ENCODE measurements at regions of chr5 and their contacts with region 1.

Region 1: DNA sequence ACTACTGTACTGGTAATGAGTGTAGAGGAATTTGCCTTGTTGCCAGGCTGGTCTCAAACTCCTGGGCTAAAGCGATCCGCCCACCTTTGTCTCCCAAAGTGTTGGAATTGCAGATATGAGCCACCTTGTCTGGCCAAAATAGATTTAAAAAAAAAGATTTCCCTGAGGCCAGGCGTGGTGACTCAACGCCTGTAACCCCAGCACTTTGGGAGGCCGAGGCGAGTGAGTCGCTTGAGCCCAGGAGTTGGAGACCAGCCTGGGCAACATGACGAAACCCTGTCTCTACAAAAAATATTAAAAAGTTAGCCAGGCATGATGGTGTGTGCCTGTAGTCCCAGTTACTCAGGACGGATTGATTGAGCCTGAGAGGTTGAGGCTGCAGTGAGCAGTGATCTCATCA is 62.5 kb downstream of the IPO11 start:
- DNase-seq: peak; percentile 79
- ATAC-seq: peak; percentile 91
- H3K4me3 ChIP-seq: no peak overlapping the region
- H3K27ac ChIP-seq: no peak overlapping the region
- H3K4me1 ChIP-seq: peaks cover 6% of the 10 kb centered on the region
- H3K27me3 ChIP-seq: no peaks in the 10 kb centered on the region
- CTCF ChIP-seq: no peak
- POLR2A ChIP-seq: no peak
- RAD21 ChIP-seq: no peak

Region 2: GRCh38 chr5:61551637-61552313 is 923.3 kb before region 1 on chr5:
- CTCF ChIA-PET with region 1: no interaction called
- POLR2A ChIA-PET with region 1: no interaction called
- dilution Hi-C with region 1: no loop called
- in situ Hi-C with region 1: no loop called
- intact Hi-C with region 1: no loop called
- DNase-seq: no peak
- ATAC-seq: no peak
- H3K4me3 ChIP-seq: no peak overlapping the region
- H3K27ac ChIP-seq: no peak overlapping the region
- H3K4me1 ChIP-seq: no peaks in the 10 kb centered on the region
- H3K27me3 ChIP-seq: peaks cover 2% of the 10 kb centered on the region; the same call in 1 of the 2 replicates
- CTCF ChIP-seq: no peak
- POLR2A ChIP-seq: no peak
- RAD21 ChIP-seq: no peak

Region 3: GRCh38 chr5:62431735-62432620 is 43.1 kb before region 1 on chr5:
- CTCF ChIA-PET with region 1: no interaction called
- POLR2A ChIA-PET with region 1: no interaction called
- dilution Hi-C with region 1: no loop called
- in situ Hi-C with region 1: no loop called
- intact Hi-C with region 1: no loop called
- DNase-seq: no peak
- ATAC-seq: no peak; the same call in 1 of the 2 replicates
- H3K4me3 ChIP-seq: no peak overlapping the region
- H3K27ac ChIP-seq: no peak overlapping the region
- H3K4me1 ChIP-seq: no peaks in the 10 kb centered on the region
- H3K27me3 ChIP-seq: no peaks in the 10 kb centered on the region
- CTCF ChIP-seq: no peak
- POLR2A ChIP-seq: no peak
- RAD21 ChIP-seq: no peak

Region 4: GRCh38 chr5:62499756-62500155 is 24.7 kb after region 1 on chr5:
- CTCF ChIA-PET with region 1: no interaction called
- POLR2A ChIA-PET with region 1: interaction called, 10 read pairs
- dilution Hi-C with region 1: no loop called
- in situ Hi-C with region 1: no loop called
- intact Hi-C with region 1: no loop called
- DNase-seq: no peak
- ATAC-seq: no peak
- H3K4me3 ChIP-seq: no peak overlapping the region
- H3K27ac ChIP-seq: no peak overlapping the region
- H3K4me1 ChIP-seq: no peaks in the 10 kb centered on the region
- H3K27me3 ChIP-seq: no peaks in the 10 kb centered on the region
- CTCF ChIP-seq: no peak
- POLR2A ChIP-seq: no peak
- RAD21 ChIP-seq: no peak

Region 5: DNA sequence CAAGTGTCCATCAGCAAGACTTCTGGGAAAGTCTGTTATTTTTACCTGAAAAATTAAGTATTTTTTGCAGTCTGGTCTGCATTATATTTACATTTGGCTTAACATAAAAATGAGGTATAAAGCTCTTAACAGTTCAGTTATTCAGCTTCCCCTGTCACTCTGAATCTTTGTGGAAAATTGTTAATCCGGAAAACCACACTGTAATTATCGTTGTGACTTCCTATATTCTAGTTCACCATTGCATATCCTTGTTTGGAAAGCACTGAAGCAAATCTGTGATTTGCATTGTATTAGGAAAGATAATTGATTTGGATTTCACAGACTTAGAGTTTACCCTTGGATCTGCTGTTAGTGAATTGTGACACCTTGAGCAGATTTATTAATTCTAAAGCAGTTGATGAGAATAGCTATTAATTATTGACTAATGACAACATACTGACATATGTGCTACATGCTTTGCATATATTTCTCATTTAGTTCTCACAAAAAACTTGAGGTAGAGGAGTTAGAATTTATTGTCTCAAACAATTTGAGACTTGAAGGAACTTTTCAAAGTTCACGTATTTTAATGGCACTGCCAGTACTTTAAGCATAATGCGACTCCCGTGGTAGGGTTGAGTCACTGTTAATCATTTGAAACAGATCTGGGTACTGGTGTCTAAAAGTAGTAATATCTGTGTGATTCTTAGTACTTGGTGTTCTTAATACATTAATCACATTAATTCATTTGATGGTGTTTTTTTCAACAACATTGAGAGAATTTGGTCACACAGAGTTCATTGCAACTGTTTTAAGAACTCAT is 31.8 kb after region 1 on chr5:
- CTCF ChIA-PET with region 1: no interaction called
- POLR2A ChIA-PET with region 1: interaction called, 11 read pairs
- dilution Hi-C with region 1: no loop called
- in situ Hi-C with region 1: no loop called
- intact Hi-C with region 1: no loop called
- DNase-seq: no peak
- ATAC-seq: no peak
- H3K4me3 ChIP-seq: no peak overlapping the region
- H3K27ac ChIP-seq: no peak overlapping the region
- H3K4me1 ChIP-seq: no peaks in the 10 kb centered on the region
- H3K27me3 ChIP-seq: no peaks in the 10 kb centered on the region
- CTCF ChIP-seq: no peak
- POLR2A ChIP-seq: no peak
- RAD21 ChIP-seq: no peak

Region 6: GRCh38 chr5:62547945-62548630 is 73.0 kb after region 1 on chr5:
- CTCF ChIA-PET with region 1: no interaction called
- POLR2A ChIA-PET with region 1: no interaction called
- dilution Hi-C with region 1: no loop called
- in situ Hi-C with region 1: no loop called
- intact Hi-C with region 1: loop called (anchors 5 kb)
- DNase-seq: peak; percentile 41
- ATAC-seq: peak; percentile 83
- H3K4me3 ChIP-seq: no peak overlapping the region
- H3K27ac ChIP-seq: no peak overlapping the region
- H3K4me1 ChIP-seq: peaks cover 3% of the 10 kb centered on the region
- H3K27me3 ChIP-seq: no peaks in the 10 kb centered on the region
- CTCF ChIP-seq: no peak
- POLR2A ChIP-seq: no peak
- RAD21 ChIP-seq: no peak